ENCODE measurements at regions of chr17 and their contacts with region 1.

Region 1: DNA sequence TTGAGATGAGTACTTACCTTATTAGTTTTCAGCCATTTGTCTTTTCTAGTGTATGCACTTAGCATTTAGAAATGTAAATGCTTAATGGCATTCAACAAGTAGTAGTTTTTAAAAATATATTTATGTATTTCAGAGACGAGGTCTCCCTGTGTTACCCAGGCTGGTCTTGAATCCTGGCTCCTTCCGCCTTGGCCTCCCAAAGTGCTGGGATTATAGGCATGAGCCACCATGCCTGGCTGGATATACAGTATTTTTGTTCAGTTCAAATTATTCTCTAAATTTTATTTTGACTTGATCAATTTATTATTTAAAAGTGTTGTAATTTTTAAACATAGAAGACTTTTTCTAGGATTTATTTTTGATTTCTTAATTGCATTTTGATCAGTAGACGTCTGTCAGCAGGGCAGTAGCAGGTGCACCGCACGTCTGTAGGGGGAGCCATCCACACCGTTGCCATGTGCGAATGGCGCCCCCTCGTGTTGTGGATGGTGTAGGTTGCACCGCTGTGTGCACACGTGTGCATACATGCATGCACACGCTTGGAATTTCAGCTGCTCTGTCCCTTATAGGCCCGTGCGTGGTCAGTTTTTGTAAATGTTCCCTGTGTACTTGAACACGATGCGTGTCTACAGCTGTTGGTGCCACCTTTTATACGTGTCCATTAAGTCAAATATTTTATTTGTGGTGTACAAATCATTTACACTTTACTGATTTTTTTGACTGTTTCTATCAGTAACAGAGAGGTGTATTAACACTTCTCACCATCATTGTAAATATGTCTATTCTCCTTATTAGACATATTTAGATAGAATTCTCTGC is 30.6 kb downstream of the RPTOR start:
- DNase-seq: peak; percentile 93
- H3K4me3 Mint-ChIP-seq: no peak overlapping the region
- H3K27ac Mint-ChIP-seq: no peak overlapping the region
- H3K4me1 Mint-ChIP-seq: peaks cover 14% of the 10 kb centered on the region
- H3K27me3 Mint-ChIP-seq: no peaks in the 10 kb centered on the region

Region 2: DNA sequence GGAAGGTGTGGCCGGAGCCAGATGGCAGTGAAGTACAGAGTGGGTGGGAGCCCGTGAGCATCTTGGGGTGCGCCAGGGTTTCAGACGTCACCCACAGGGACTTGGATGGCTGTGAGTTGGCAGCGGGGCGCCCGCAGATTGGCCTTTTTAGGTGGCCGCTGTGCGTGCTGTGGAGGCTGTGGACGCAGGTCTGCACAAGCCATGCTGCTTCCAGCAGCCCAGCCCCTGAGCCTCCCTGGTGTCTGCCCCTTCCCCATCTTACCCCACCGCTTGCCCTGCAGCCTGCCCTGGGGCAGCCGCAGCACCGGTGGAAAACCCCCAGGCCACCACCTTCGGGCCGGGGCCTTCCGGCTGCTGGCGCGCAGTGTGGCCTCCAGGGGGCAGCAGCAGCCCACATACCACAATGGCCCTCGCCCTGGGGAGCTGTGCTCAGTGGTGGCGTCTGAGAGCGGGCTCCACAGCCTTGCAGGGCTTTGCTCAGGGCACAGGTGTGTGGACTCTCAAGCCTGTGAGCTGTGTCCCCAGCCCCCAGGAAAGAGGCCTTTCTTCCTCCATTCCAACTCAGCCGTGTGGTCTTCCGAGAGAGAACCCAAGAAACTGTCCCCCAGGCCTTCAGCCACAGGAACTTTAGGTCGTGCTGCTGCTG is 148.5 kb before region 1 on chr17:
- CTCF ChIA-PET with region 1: interaction called, 22 read pairs
- POLR2A ChIA-PET with region 1: interaction called, 3 read pairs
- DNase-seq: peak; percentile 88
- H3K4me3 Mint-ChIP-seq: no peak overlapping the region
- H3K27ac Mint-ChIP-seq: no peak overlapping the region
- H3K4me1 Mint-ChIP-seq: peaks cover 19% of the 10 kb centered on the region
- H3K27me3 Mint-ChIP-seq: peaks cover 2% of the 10 kb centered on the region

Region 3: GRCh38 chr17:80585890-80586845 is 10.9 kb after region 1 on chr17:
- CTCF ChIA-PET with region 1: interaction called, 20 read pairs
- POLR2A ChIA-PET with region 1: interaction called, 3 read pairs
- DNase-seq: no peak
- H3K4me3 Mint-ChIP-seq: no peak overlapping the region
- H3K27ac Mint-ChIP-seq: peak overlapping the region; percentile 22
- H3K4me1 Mint-ChIP-seq: peaks cover 30% of the 10 kb centered on the region
- H3K27me3 Mint-ChIP-seq: no peaks in the 10 kb centered on the region

Region 4: GRCh38 chr17:80591788-80592187 is 16.5 kb after region 1 on chr17:
- CTCF ChIA-PET with region 1: interaction called, 15 read pairs
- POLR2A ChIA-PET with region 1: no interaction called
- DNase-seq: no peak
- H3K4me3 Mint-ChIP-seq: no peak overlapping the region
- H3K27ac Mint-ChIP-seq: no peak overlapping the region
- H3K4me1 Mint-ChIP-seq: peaks cover 46% of the 10 kb centered on the region
- H3K27me3 Mint-ChIP-seq: no peaks in the 10 kb centered on the region

Region 5: DNA sequence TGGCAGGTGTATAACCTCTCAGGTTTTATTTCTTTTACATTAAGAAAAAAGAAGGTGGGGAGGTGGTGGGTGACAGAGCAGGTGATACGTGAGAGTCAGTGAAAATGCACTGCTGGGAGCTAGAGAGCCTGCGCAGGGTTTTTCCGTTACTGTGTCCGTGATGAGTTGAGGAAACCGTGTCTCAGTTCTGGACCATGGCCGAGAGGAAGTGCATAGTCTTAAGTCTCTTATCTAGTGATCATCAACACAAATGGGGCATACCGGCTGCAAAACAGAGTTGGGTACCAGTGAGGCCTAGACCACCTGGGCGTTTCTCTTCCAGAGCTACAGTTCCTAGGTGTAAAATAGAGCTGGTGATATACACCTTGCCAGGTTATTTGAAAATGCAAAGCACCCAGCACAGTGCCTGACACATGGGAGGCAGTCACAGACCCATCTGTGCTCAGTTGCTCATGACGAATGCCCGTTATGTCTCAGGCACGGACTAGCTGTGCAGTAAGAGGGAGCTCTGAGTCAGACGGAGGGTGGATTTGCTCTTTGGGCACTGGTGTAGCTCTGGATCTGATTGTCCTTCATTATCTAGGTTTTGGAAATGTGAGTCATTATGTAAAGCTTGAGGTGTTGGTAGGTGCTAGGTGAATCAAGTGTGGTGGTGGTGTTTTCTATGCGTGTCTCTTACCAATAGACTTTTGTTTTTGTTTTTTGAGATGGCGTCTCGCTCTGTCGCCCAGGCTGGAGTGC is 30.2 kb after region 1 on chr17:
- CTCF ChIA-PET with region 1: interaction called, 12 read pairs
- POLR2A ChIA-PET with region 1: no interaction called
- DNase-seq: peak; percentile 66
- H3K4me3 Mint-ChIP-seq: peak overlapping the region; percentile 4
- H3K27ac Mint-ChIP-seq: peak overlapping the region; percentile 72
- H3K4me1 Mint-ChIP-seq: peaks cover 59% of the 10 kb centered on the region
- H3K27me3 Mint-ChIP-seq: no peaks in the 10 kb centered on the region